ENCODE measurements at regions of chr20 and their contacts with region 1.

Region 1: DNA sequence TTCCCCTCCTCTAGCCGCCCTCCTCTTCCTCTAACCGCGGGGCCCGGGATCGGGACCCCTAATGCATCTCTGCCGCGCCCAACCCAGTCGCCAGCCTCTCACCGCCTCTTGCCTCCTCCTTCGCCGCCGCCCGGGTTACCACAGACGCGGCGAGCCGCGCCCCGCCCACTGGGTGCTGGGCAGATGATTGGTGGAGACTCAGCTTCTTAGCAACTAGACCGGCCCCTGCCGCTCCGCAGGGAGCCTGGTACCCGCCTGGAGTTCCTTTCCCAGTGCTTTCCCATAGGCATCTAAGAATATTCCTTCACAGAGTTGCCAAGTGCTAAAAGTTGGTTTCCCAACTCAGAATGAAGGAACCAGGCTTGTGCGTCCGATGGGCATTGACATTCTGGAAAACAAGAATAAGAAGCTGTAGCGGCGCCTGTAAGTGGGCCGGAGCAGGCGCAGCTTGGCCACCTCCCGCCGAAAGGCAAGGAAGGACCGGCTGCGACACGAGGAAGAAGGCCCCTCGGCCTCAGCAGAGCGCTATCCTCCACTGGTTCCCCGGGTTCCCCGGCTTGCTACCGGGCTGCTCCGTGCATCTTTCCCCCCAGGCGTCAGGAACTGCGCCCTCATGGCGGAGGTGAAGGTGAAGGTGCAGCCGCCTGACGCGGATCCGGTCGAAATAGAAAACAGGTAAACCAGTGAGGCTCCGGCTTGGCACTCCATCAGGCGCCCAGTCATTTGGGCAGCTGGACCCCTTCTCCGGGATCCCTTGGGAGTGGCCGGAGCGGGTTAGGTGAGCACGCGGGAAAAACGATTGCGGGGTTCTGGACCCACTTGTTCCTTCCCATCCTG is at the starts of genes DZANK1 and POLR3F:
- DNase-seq: peak; percentile 96
- H3K4me3 Mint-ChIP-seq: peak within 1 kb of the TSS; percentile 98
- H3K27ac Mint-ChIP-seq: peak within 1 kb of the TSS; percentile 99
- H3K4me1 Mint-ChIP-seq: no peaks in the 10 kb centered on the region
- H3K27me3 Mint-ChIP-seq: no peaks in the 10 kb centered on the region
- CTCF ChIP-seq: no peak
- total RNA-seq, gene DZANK1: 2.5 and 3.0 TPM in 2 replicates
- total RNA-seq, gene POLR3F: 11.2 and 15.1 TPM in 2 replicates

Region 2: DNA sequence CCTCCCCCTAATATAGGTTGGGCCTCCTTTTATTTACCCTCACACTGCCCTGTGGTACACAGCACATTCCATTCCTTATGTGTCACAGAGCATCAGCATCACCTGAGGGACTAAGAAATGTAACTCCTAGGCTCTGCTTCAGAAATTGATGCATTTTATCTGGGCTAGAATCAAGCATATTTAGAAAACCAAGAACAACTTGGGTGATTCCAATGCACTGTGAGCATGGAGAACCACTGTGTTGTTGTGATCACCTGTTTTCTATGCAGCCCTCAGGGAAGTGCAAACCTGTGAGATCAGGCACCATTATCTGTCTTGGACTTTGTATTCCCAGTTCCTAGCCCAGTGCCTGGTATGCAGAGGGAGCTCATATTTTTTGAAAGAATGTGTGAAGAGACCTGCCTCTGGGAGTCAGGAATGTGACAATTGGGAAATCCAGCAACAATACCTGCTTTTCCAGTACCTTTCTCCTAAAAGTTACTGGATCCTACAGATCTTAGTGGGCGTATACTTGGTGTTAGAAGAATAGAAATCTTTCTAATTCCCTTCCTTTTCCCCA is 322.5 kb before region 1 on chr20:
- CTCF ChIA-PET with region 1: no interaction called
- POLR2A ChIA-PET with region 1: no interaction called
- intact Hi-C with region 1: no loop called
- DNase-seq: no peak
- H3K4me3 Mint-ChIP-seq: no peak overlapping the region
- H3K27ac Mint-ChIP-seq: no peak overlapping the region
- H3K4me1 Mint-ChIP-seq: peaks cover 11% of the 10 kb centered on the region
- H3K27me3 Mint-ChIP-seq: no peaks in the 10 kb centered on the region
- CTCF ChIP-seq: no peak

Region 3: GRCh38 chr20:18324596-18325089 is 142.5 kb before region 1 on chr20:
- CTCF ChIA-PET with region 1: no interaction called
- POLR2A ChIA-PET with region 1: no interaction called
- intact Hi-C with region 1: no loop called
- DNase-seq: no peak
- H3K4me3 Mint-ChIP-seq: no peak overlapping the region
- H3K27ac Mint-ChIP-seq: no peak overlapping the region
- H3K4me1 Mint-ChIP-seq: no peaks in the 10 kb centered on the region
- H3K27me3 Mint-ChIP-seq: no peaks in the 10 kb centered on the region
- CTCF ChIP-seq: no peak

Region 4: DNA sequence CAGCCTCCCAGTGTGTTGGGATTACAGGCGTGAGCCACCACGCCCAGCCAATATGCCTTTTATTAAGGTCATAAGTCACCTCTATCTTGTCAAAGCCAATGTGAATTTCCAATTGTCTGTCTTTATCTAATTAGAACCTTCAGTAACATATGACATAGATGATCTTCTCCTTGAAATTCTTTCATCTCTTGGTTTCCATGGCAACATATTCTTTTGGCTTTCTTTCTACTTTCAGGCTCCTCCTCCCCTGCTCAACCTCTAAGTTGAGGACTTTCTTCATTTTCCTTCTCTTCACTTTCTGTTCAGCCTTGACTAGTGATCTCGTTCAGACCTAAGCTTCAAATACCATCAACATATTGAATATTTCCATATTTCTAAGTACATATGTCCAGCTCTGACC is 15.9 kb before region 1 on chr20:
- CTCF ChIA-PET with region 1: interaction called, 3 read pairs
- POLR2A ChIA-PET with region 1: interaction called, 14 read pairs
- intact Hi-C with region 1: no loop called
- DNase-seq: no peak
- H3K4me3 Mint-ChIP-seq: no peak overlapping the region
- H3K27ac Mint-ChIP-seq: no peak overlapping the region
- H3K4me1 Mint-ChIP-seq: no peaks in the 10 kb centered on the region
- H3K27me3 Mint-ChIP-seq: no peaks in the 10 kb centered on the region
- CTCF ChIP-seq: no peak

Region 5: GRCh38 chr20:18477821-18478220 is 10.7 kb after region 1 on chr20:
- CTCF ChIA-PET with region 1: interaction called, 5 read pairs
- POLR2A ChIA-PET with region 1: interaction called, 38 read pairs
- intact Hi-C with region 1: no loop called
- DNase-seq: no peak
- H3K4me3 Mint-ChIP-seq: no peak overlapping the region
- H3K27ac Mint-ChIP-seq: no peak overlapping the region
- H3K4me1 Mint-ChIP-seq: no peaks in the 10 kb centered on the region
- H3K27me3 Mint-ChIP-seq: no peaks in the 10 kb centered on the region
- CTCF ChIP-seq: no peak

Region 6: GRCh38 chr20:18496740-18497592 is 29.9 kb after region 1 on chr20 and contains the start of gene RBBP9:
- CTCF ChIA-PET with region 1: interaction called, 8 read pairs
- POLR2A ChIA-PET with region 1: interaction called, 81 read pairs
- intact Hi-C with region 1: loop called (anchors 1 kb)
- DNase-seq: peak; percentile 83
- H3K4me3 Mint-ChIP-seq: peak within 1 kb of the TSS; percentile 91
- H3K27ac Mint-ChIP-seq: peak within 1 kb of the TSS; percentile 87
- H3K4me1 Mint-ChIP-seq: no peaks in the 10 kb centered on the region
- H3K27me3 Mint-ChIP-seq: no peaks in the 10 kb centered on the region
- CTCF ChIP-seq: no peak
- total RNA-seq, gene RBBP9: 6.8 and 7.3 TPM in 2 replicates

Region 7: GRCh38 chr20:18524646-18525045 is 57.5 kb after region 1 on chr20:
- CTCF ChIA-PET with region 1: no interaction called
- POLR2A ChIA-PET with region 1: interaction called, 11 read pairs
- intact Hi-C with region 1: no loop called
- DNase-seq: peak; percentile 65
- H3K4me3 Mint-ChIP-seq: peak overlapping the region; percentile 30
- H3K27ac Mint-ChIP-seq: no peak overlapping the region
- H3K4me1 Mint-ChIP-seq: peaks cover 14% of the 10 kb centered on the region
- H3K27me3 Mint-ChIP-seq: no peaks in the 10 kb centered on the region
- CTCF ChIP-seq: no peak

Region 8: GRCh38 chr20:18566892-18567742 is 100.0 kb after region 1 on chr20 and contains the start of gene SMIM26:
- CTCF ChIA-PET with region 1: no interaction called
- POLR2A ChIA-PET with region 1: interaction called, 11 read pairs
- intact Hi-C with region 1: no loop called
- DNase-seq: peak; percentile 94
- H3K4me3 Mint-ChIP-seq: peak within 1 kb of the TSS; percentile 100
- H3K27ac Mint-ChIP-seq: peak within 1 kb of the TSS; percentile 97
- H3K4me1 Mint-ChIP-seq: peaks cover 19% of the 10 kb centered on the region
- H3K27me3 Mint-ChIP-seq: no peaks in the 10 kb centered on the region
- CTCF ChIP-seq: no peak
- total RNA-seq, gene SMIM26: 106 and 127 TPM in 2 replicates

Region 9: DNA sequence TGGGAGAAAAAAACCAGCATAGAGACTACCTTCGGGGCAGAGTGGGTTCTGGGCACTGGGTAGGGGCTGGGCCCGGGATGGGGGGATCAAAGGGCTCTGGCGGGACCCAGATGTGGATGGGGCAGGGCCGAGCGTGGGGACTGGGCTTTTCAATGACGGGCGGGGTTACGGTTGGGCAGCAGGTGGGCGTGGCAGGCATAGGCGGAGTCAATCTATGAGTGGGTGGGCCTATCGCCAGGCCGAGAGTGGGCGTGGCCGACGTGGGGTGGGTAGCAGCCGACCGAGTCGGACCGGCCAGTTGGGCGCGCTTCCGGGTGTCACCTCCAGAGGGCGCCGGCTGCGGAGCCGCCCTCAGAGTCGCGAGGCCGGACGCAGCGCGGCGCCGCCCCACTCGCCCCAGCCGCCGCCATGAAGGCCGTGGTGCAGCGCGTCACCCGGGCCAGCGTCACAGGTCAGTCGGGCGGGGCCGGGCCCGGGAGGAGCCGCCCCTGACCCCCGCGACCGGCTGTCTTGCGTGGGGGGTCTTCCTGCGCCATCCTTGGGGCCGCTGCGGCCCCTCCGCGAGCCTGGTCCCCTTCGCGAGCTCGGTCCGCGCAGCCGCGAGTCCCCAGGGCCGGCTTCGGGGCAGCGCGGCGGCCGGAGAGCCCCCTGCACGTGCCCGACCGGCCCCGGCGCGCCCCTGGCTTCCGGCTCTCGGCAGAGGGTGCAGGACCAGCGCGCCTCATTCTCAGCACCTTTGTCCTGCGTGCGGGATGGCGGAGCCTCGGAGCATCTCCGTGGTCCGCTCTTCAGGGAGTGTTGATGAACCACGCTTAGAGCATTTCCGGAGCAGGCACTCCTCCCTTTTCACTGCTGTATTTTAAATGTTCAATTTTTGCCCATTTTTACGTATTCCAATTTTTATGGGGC is 120.8 kb after region 1 on chr20 and contains the start of gene DTD1:
- CTCF ChIA-PET with region 1: no interaction called
- POLR2A ChIA-PET with region 1: interaction called, 7 read pairs
- intact Hi-C with region 1: loop called (anchors 5 kb)
- DNase-seq: peak; percentile 89
- H3K4me3 Mint-ChIP-seq: peak within 1 kb of the TSS; percentile 89
- H3K27ac Mint-ChIP-seq: peak within 1 kb of the TSS; percentile 96
- H3K4me1 Mint-ChIP-seq: peaks cover 18% of the 10 kb centered on the region
- H3K27me3 Mint-ChIP-seq: no peaks in the 10 kb centered on the region
- CTCF ChIP-seq: peak; percentile 73
- total RNA-seq, gene DTD1: 101 and 113 TPM in 2 replicates

Region 10: DNA sequence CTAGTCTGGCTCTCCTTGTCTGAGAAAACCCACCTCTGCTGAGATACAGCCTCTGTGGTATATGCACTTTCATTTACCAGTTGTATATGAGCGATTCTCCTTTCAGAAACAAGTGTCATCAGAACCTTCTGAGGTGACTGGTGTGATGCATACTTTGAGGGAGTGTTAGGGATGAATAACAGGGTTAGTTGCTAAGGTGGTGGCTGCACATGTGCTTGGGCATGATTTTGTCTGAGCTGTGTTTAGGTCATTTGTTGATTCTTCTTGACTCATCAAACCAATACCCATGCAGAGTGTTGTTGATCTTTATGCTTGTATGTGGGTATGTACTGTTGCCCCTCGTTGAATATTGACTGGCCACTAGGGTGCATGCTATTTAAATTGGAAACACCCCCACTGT is 146.4 kb after region 1 on chr20:
- CTCF ChIA-PET with region 1: no interaction called
- POLR2A ChIA-PET with region 1: no interaction called
- intact Hi-C with region 1: no loop called
- DNase-seq: peak; percentile 12
- H3K4me3 Mint-ChIP-seq: no peak overlapping the region
- H3K27ac Mint-ChIP-seq: no peak overlapping the region
- H3K4me1 Mint-ChIP-seq: no peaks in the 10 kb centered on the region
- H3K27me3 Mint-ChIP-seq: no peaks in the 10 kb centered on the region
- CTCF ChIP-seq: no peak

Region 11: DNA sequence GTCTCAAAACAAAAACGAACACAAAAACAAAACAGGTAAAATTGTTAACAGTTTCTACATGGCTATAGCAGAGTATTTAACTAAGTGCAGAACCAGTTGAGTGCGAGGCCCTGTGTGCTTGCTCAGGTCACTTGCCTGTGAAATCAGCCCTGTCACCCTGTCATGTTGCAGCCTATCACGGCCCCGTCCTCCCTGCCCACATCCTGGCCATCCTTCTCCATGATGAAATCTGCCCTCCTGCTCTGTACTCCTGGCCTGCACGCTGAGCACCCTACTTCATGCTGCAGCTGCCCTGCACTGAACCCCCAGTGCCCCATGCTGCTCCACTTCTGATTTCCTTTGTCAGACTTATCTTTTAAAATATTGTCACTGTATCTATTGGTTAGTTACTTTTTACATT is 183.1 kb after region 1 on chr20:
- CTCF ChIA-PET with region 1: no interaction called
- POLR2A ChIA-PET with region 1: no interaction called
- intact Hi-C with region 1: no loop called
- DNase-seq: no peak
- H3K4me3 Mint-ChIP-seq: no peak overlapping the region
- H3K27ac Mint-ChIP-seq: no peak overlapping the region
- H3K4me1 Mint-ChIP-seq: no peaks in the 10 kb centered on the region
- H3K27me3 Mint-ChIP-seq: no peaks in the 10 kb centered on the region
- CTCF ChIP-seq: no peak

Measured in MCF 10A (cell line).